Esophagus squamous epithelium (tissue), 5 donors: ENCODE measurements at regions of chr7 and their contacts with region 1.

Region 1: GRCh38 chr7:14457568-14458453 is 444.7 kb downstream of the DGKB start:
- DNase-seq: no peak
- H3K4me3 ChIP-seq: no peak overlapping the region
- H3K27ac ChIP-seq: no peak overlapping the region
- H3K4me1 ChIP-seq: no peaks in the 10 kb centered on the region
- H3K27me3 ChIP-seq: no peaks in the 10 kb centered on the region
- CTCF ChIP-seq: peak; percentile 53 to 85 (median 78)
- POLR2A ChIP-seq: no peak

Region 2: GRCh38 chr7:13279854-13280435 is 1177.9 kb before region 1 on chr7:
- intact Hi-C with region 1: loop called (anchors 10 kb)
- DNase-seq: no peak
- H3K4me3 ChIP-seq: no peak overlapping the region
- H3K27ac ChIP-seq: no peak overlapping the region
- H3K4me1 ChIP-seq: no peaks in the 10 kb centered on the region
- H3K27me3 ChIP-seq: no peaks in the 10 kb centered on the region
- CTCF ChIP-seq: peak in 4 of 6 experiments; percentile 23 to 46 (median 43)
- POLR2A ChIP-seq: no peak

Region 3: DNA sequence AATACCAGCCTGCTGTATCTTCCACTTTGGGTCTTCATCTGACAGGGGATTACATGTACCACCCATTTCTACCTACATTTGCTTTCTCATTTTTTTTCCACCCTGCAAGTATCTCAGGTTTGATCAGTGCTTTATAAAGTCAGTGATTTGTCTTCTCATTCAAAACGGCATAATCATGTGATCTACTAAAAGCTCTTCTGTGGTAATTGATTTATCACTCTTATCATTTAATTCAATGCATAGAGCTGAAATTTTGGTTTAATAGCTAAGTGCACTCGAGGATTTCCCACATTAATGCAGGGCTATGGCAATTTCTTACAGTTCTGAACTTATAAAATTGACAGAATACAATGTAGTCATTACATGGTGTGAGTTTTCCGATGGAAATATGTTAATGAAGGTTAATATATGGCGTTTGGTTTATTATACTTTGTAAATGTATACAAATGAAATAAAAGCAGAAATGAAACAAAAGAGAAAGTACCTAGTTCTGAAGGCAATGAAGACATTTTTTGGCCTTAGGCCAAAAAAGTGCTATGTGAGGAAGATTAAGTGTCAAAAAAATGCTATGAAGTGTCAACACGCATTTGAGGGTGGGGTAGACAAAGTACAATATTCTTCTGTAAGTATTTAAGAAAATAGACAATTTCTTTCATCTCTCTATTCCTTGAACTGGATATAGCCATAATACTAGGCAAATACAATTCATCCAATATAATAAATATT is 925.6 kb before region 1 on chr7:
- intact Hi-C with region 1: loop called (anchors 5 kb)
- DNase-seq: no peak
- H3K4me3 ChIP-seq: no peak overlapping the region
- H3K27ac ChIP-seq: no peak overlapping the region
- H3K4me1 ChIP-seq: no peaks in the 10 kb centered on the region
- H3K27me3 ChIP-seq: no peaks in the 10 kb centered on the region
- CTCF ChIP-seq: no peak
- POLR2A ChIP-seq: no peak

Region 4: GRCh38 chr7:14576578-14576977 is 118.8 kb after region 1 on chr7:
- intact Hi-C with region 1: no loop called
- DNase-seq: no peak
- H3K4me3 ChIP-seq: no peak overlapping the region
- H3K27ac ChIP-seq: no peak overlapping the region
- H3K4me1 ChIP-seq: no peaks in the 10 kb centered on the region
- H3K27me3 ChIP-seq: no peaks in the 10 kb centered on the region
- CTCF ChIP-seq: no peak
- POLR2A ChIP-seq: no peak